PC-3 (cell line): ENCODE measurements at regions of chr11 and their contacts with region 1.

Region 1: DNA sequence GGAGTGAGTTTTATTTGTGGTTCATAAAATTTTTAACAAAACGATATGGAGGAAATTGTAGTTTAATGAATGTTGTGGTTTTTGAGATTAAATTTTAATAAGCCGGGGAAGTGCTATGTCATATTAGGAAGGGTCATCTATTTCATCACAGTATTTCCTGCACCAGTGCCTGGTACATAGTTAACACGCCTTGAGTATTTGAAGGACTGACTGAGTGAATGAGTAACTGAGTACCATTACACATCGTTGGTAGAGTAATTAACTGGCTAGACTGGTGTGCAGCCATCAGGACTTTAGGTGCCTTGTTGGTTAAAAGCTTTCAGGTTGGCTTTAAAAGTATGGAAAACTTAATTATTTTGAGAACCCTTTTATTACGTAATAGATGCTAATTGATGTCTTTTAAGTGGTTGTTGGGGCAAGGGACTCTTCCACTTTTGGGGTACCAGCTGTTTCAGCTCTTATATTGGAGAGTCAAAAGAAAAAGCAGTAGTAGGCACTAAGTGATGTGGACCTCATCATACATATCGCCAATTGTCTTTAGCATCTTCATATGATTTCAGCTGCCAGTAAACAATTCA is 101.8 kb downstream of the DDX10 start:
- DNase-seq: no peak
- ATAC-seq: no peak
- H3K4me3 ChIP-seq: no peak overlapping the region
- H3K27ac ChIP-seq: no peak overlapping the region
- H3K4me1 ChIP-seq: no peaks in the 10 kb centered on the region
- H3K27me3 ChIP-seq: no peaks in the 10 kb centered on the region
- CTCF ChIP-seq: no peak

Region 2: GRCh38 chr11:108788565-108789199 is 22.0 kb after region 1 on chr11:
- CTCF ChIA-PET with region 1: no interaction called
- POLR2A ChIA-PET with region 1: no interaction called
- intact Hi-C with region 1: no loop called
- DNase-seq: peak; percentile 63
- ATAC-seq: peak; percentile 71
- H3K4me3 ChIP-seq: no peak overlapping the region
- H3K27ac ChIP-seq: no peak overlapping the region
- H3K4me1 ChIP-seq: peaks cover 11% of the 10 kb centered on the region; the same call in 1 of the 2 replicates
- H3K27me3 ChIP-seq: no peaks in the 10 kb centered on the region
- CTCF ChIP-seq: peak; percentile 73

Region 3: GRCh38 chr11:108887436-108888238 is 121.0 kb after region 1 on chr11:
- CTCF ChIA-PET with region 1: no interaction called
- POLR2A ChIA-PET with region 1: no interaction called
- intact Hi-C with region 1: no loop called
- DNase-seq: peak; percentile 15
- ATAC-seq: peak; percentile 71
- H3K4me3 ChIP-seq: no peak overlapping the region
- H3K27ac ChIP-seq: no peak overlapping the region
- H3K4me1 ChIP-seq: peaks cover 23% of the 10 kb centered on the region
- H3K27me3 ChIP-seq: no peaks in the 10 kb centered on the region
- CTCF ChIP-seq: no peak

Region 4: GRCh38 chr11:108916290-108916689 is 149.6 kb after region 1 on chr11:
- CTCF ChIA-PET with region 1: no interaction called
- POLR2A ChIA-PET with region 1: interaction called, 12 read pairs
- intact Hi-C with region 1: no loop called
- DNase-seq: peak; percentile 28
- ATAC-seq: no peak
- H3K4me3 ChIP-seq: no peak overlapping the region
- H3K27ac ChIP-seq: no peak overlapping the region
- H3K4me1 ChIP-seq: peaks cover 5% of the 10 kb centered on the region; the same call in 1 of the 2 replicates
- H3K27me3 ChIP-seq: no peaks in the 10 kb centered on the region
- CTCF ChIP-seq: no peak